GM10248 (cell line): ENCODE measurements at regions of chr2 and their contacts with region 1.

Region 1: DNA sequence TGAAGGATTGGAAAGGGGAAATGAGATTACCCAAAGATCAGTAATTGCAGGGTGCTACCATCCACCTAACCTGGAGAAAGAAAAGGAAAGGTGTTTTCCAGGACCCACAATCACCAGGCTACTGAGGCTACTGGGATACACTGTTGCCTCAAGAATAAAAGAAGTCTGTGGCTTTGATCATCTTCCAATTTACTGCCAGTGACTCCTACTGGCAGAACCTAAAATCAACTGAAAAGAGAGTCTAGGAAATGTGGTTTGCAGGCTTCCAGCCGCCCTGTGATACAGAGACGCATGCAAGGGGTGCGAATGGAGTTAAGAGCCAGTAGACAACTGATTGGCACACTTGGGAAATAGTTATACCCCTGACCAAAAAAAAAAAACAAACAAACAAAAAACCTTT is 16.6 kb upstream of the TTL start:
- DNase-seq: no peak
- CTCF ChIP-seq: no peak

Region 2: GRCh38 chr2:112451317-112451716 is 14.1 kb before region 1 on chr2:
- CTCF ChIA-PET with region 1: interaction called, 10 read pairs
- POLR2A ChIA-PET with region 1: no interaction called
- DNase-seq: no peak
- CTCF ChIP-seq: no peak